PC-9 (cell line): ENCODE measurements at regions of chr15 and their contacts with region 1.

Region 1: GRCh38 chr15:40367686-40368611 is 9.9 kb downstream of the DISP2 start:
- DNase-seq: peak; percentile 59 to 91
- H3K4me3 ChIP-seq: no peak overlapping the region
- H3K27ac ChIP-seq: no peak overlapping the region
- H3K4me1 ChIP-seq: no peaks in the 10 kb centered on the region
- H3K27me3 ChIP-seq: no peaks in the 10 kb centered on the region
- CTCF ChIP-seq: peak; percentile 59

Region 2: GRCh38 chr15:40282869-40283614 is 84.9 kb before region 1 on chr15 and contains the start of gene ANKRD63:
- CTCF ChIA-PET with region 1: interaction called, 14 read pairs
- POLR2A ChIA-PET with region 1: no interaction called
- intact Hi-C with region 1: loop called (anchors 2 kb)
- DNase-seq: no peak
- H3K4me3 ChIP-seq: peak within 1 kb of the TSS; percentile 62
- H3K27ac ChIP-seq: no peak within 1 kb of the TSS
- H3K4me1 ChIP-seq: no peaks in the 10 kb centered on the region
- H3K27me3 ChIP-seq: no peaks in the 10 kb centered on the region
- CTCF ChIP-seq: no peak
- total RNA-seq, gene ANKRD63: not detected in 2 replicates

Region 3: DNA sequence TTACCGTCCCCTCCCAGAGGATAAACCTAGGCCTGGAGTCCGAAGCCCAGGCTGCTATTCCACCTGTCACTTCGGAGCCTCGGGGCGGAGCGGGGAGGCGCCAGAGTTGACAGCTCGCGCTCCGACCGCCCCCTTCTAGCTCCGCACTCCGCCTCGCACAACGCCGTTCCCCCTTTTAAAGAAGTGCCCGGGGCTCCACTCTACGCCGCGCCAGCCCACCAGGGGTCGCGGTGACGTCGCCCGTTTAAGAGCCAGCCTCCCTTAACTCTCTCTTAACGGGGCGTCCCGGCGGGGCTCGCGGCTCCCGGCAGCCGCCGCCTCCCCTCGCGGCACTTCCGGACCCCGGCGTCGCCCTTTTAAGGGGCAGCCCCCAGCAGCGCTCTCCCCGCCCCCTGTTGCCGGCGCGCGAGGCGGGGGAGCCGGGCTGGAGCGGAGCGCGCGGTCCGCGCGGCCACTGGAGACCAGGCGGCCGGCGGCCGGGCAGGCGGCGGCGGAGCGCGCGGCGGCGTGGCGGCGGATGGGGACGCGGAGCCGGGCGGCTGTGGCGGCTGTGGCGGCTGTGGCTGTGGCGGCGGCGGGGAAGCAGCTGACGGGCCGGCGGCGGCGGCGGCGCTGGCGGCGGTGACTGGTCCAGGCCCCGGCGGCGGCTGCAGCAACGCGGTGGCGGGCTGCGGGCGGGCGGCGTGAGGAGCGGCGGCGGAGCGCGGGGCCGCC is 44.6 kb before region 1 on chr15 and contains the start of gene INAFM2:
- CTCF ChIA-PET with region 1: interaction called, 3 read pairs
- POLR2A ChIA-PET with region 1: no interaction called
- intact Hi-C with region 1: loop called (anchors 1 kb)
- DNase-seq: peak; percentile 59 to 81
- H3K4me3 ChIP-seq: peak within 1 kb of the TSS; percentile 59
- H3K27ac ChIP-seq: no peak within 1 kb of the TSS
- H3K4me1 ChIP-seq: peaks cover 10% of the 10 kb centered on the region; the same call in 1 of the 2 replicates
- H3K27me3 ChIP-seq: no peaks in the 10 kb centered on the region
- CTCF ChIP-seq: peak; percentile 50
- total RNA-seq, gene INAFM2: 2.4 and 3.1 TPM in 2 replicates

Region 4: DNA sequence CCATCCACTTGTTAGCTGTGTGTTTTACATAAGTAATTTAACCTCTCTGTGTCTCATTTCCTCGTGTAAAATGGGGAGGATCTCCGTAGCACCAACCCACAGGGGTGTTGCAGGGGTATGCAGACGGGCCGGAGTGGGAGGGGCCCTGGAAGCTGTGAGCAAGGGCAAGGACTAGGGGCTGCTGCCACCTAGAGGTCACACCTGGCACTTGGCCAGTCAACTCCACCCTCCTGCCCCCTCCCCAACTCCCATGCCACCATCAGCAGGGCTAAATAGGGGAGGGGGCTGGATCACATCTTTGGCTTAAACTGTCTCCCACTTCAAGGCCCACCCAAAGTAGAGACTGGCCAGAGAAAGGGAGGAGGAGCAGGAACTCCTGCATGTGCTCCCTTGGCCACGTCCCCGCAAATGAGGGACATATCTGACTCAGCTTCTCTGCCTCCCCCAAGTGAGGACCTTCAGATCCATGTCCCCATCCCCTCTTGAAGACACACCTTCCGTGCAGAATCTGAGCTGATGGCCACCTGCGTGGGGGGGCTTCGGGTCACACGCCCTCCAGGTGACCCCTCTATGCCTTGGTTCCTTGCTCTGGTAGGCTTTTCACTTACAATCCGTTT is 29.8 kb before region 1 on chr15:
- CTCF ChIA-PET with region 1: interaction called, 4 read pairs
- POLR2A ChIA-PET with region 1: no interaction called
- intact Hi-C with region 1: loop called (anchors 1 kb)
- DNase-seq: peak; percentile 63 to 78
- H3K4me3 ChIP-seq: peak overlapping the region; percentile 94
- H3K27ac ChIP-seq: peak overlapping the region; percentile 91
- H3K4me1 ChIP-seq: peaks cover 54% of the 10 kb centered on the region
- H3K27me3 ChIP-seq: no peaks in the 10 kb centered on the region
- CTCF ChIP-seq: peak; percentile 88

Region 5: GRCh38 chr15:40506964-40507571 is 139.1 kb after region 1 on chr15:
- CTCF ChIA-PET with region 1: interaction called, 19 read pairs
- POLR2A ChIA-PET with region 1: no interaction called
- intact Hi-C with region 1: no loop called
- DNase-seq: peak; percentile 47 to 69
- H3K4me3 ChIP-seq: no peak overlapping the region; the same call in 1 of the 2 replicates
- H3K27ac ChIP-seq: no peak overlapping the region
- H3K4me1 ChIP-seq: peaks cover 7% of the 10 kb centered on the region
- H3K27me3 ChIP-seq: no peaks in the 10 kb centered on the region
- CTCF ChIP-seq: peak; percentile 51